ENCODE measurements at regions of chr15 and their contacts with region 1.

Region 1: DNA sequence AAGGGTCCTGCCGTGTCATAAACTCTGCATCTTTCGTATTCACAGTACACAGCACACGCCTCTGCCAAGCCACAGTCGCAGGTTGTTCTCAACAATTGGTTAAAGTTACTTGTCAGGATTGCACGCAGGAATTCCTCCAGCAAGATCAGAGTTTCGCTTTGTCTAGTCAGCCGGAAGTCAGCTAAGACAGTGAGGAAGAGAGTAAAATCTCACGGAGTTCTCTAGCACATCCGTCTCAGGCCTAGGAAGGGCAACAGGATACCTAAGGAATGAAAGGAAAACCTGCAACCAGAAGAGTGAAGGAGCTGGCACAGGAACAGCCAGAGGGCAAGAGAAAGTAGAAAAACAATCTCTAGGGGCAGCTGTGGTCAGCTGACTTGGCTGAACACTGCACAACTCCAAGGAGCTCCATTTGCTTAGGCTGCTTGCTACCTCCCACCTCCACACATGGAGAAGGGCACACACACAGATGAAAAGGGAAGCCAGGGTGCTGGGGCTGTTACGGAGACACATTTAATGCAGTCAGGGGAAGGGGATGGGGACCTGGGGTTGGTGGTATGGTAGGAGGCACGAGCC is 23.7 kb downstream of the RORA start:
- DNase-seq: no peak
- ATAC-seq: no peak
- H3K4me3 ChIP-seq: no peak overlapping the region
- H3K27ac ChIP-seq: no peak overlapping the region
- H3K4me1 ChIP-seq: no peaks in the 10 kb centered on the region
- CTCF ChIP-seq: no peak
- EP300 ChIP-seq: no peak
- POLR2A ChIP-seq: no peak
- RAD21 ChIP-seq: no peak

Region 2: GRCh38 chr15:61195116-61196002 is 10.1 kb before region 1 on chr15:
- CTCF ChIA-PET with region 1: interaction called, 15 read pairs
- POLR2A ChIA-PET with region 1: no interaction called
- DNase-seq: peak; percentile 37 to 71
- ATAC-seq: peak; percentile 77 to 87
- H3K4me3 ChIP-seq: no peak overlapping the region
- H3K27ac ChIP-seq: no peak overlapping the region
- H3K4me1 ChIP-seq: no peaks in the 10 kb centered on the region
- CTCF ChIP-seq: peak; percentile 41; the same call in 2 of the 3 replicates
- EP300 ChIP-seq: no peak
- POLR2A ChIP-seq: no peak
- RAD21 ChIP-seq: peak; percentile 35 to 49

Region 3: DNA sequence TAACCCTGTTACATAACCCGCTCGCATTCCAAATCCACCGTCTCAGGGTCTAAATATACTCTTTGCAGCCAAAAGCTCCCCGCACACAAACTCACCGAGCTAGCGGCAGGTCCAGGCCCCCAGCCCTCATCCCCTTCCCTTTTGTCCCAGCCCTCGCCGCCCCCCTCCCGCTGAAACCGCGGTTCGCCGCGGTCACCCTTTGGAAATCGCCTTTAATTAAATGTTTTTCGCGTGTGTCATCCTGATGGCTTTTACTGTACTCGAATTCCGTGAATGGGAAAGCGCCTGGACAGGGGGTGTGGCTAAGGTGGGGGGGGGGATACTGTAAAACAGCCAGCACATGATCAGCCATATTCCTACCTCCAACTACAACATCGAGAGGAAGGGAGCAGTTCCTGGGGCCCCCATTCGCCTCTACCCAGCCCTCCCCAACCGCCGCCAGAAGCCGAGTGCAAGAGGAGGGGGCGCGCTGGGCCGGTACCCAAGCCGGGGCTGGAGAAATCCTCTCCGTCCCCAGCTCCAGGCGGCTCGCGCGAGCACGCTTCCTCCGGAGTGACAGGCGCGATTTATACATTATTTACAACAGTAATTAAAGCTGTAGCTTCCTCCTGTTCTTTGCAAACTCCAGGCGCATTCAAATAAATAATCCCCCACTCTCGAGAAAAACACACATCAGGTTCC is 22.0 kb after region 1 on chr15:
- CTCF ChIA-PET with region 1: interaction called, 15 read pairs
- POLR2A ChIA-PET with region 1: no interaction called
- DNase-seq: peak; percentile 10 to 26
- ATAC-seq: peak; percentile 21 to 53; a peak in 3 of 6 replicates
- H3K4me3 ChIP-seq: peak overlapping the region; percentile 90
- H3K27ac ChIP-seq: 0 out of 6 replicates have a peak overlapping the region, but pooled peaks of 1 of the 2 experiments have one; percentile 14
- H3K4me1 ChIP-seq: peaks cover 8% of the 10 kb centered on the region; the same call in 2 of the 3 replicates
- CTCF ChIP-seq: no peak
- EP300 ChIP-seq: no peak
- POLR2A ChIP-seq: no peak
- RAD21 ChIP-seq: no peak

Measured in A549 (cell line).